Right ventricle myocardium inferior (tissue), 1 donor: ENCODE measurements at regions of chr1 and their contacts with region 1.

Region 1: GRCh38 chr1:176897350-176898236 is 266.9 kb downstream of the ASTN1 start:
- DNase-seq: peak; percentile 74
- ATAC-seq: peak; percentile 57

Region 2: DNA sequence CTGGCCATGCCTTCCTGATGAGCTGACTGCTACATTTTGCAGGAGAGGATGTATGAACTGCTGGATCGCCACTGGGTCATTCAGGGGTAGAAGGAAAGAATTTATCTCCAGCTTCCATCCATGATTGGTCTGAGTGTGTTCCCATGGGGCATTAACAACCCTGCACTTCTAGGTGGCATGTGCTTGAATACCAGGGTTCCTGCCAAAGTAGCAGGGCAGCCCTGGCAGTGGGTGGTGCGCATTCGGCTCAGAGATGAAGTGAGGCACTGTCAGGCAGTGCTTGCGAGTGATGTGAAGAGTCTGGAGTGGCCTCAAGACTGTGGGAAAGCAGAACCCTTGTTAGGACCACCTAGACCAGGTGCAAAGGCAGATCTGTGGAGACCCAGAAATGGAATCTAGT is 28.0 kb before region 1 on chr1:
- intact Hi-C with region 1: no loop called
- DNase-seq: no peak
- ATAC-seq: peak; percentile 91

Region 3: GRCh38 chr1:176949033-176949662 is 51.6 kb after region 1 on chr1:
- intact Hi-C with region 1: loop called (anchors 5 kb)
- DNase-seq: no peak
- ATAC-seq: peak; percentile 68

Region 4: DNA sequence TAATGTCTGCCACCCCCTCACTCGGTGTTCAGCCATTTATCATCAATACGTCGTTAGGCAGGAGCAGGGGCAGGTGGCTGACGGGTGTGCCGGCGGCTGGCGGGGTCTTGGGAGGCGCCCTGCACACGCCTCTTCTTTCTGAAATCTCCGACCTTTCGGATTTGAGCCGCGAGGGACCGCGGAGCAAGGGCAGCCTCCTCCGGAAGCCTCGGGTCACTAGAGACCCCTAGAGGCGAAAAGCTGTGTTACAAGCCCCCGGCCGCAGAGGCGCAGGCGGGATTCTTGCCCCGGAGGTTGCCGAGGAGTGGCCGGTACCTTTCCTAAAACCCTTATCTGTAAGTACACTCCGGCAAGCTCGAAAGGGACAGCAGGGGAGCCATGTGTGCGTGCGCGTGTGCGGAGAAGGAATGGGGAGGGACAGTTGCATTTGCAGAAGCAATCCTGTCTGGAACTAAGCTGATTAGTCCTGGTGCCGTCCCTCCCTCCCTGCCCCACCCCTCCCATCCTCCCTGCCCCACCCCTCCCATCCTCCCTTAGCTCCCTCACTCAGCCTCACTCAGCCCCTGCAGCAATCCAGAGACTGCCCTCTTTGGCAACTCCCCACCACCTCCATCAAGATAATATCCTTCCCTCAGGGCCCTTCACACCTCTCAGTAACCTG is 284.2 kb after region 1 on chr1:
- intact Hi-C with region 1: loop called (anchors 1 kb)
- DNase-seq: peak; percentile 66
- ATAC-seq: peak; percentile 80

Region 5: GRCh38 chr1:177780096-177780700 is 882.6 kb after region 1 on chr1:
- intact Hi-C with region 1: loop called (anchors 2 kb)
- DNase-seq: no peak
- ATAC-seq: peak; percentile 44

Region 6: DNA sequence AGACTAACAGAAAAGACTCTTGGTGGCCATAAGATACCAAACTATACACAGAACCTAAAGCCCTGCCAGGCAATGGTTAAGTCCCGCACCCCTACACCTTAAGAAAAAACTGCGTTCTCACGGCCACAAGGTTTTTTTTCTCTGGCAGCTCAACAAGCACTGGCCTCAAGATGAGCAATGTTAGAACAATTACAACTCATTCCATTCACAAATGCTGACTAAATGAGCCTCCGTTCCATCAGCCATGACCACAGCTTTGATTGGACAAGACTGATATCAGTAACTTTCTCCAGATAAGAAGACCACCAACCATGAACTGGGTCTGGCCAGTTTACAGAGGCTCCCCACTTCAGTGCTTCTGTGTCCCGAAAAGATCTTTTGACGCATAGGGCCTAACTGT is 1040.3 kb after region 1 on chr1:
- intact Hi-C with region 1: loop called (anchors 5 kb)
- DNase-seq: no peak
- ATAC-seq: no peak